Heart right ventricle (tissue), 16 donors: ENCODE measurements at regions of chr18 and their contacts with region 1.

Region 1: DNA sequence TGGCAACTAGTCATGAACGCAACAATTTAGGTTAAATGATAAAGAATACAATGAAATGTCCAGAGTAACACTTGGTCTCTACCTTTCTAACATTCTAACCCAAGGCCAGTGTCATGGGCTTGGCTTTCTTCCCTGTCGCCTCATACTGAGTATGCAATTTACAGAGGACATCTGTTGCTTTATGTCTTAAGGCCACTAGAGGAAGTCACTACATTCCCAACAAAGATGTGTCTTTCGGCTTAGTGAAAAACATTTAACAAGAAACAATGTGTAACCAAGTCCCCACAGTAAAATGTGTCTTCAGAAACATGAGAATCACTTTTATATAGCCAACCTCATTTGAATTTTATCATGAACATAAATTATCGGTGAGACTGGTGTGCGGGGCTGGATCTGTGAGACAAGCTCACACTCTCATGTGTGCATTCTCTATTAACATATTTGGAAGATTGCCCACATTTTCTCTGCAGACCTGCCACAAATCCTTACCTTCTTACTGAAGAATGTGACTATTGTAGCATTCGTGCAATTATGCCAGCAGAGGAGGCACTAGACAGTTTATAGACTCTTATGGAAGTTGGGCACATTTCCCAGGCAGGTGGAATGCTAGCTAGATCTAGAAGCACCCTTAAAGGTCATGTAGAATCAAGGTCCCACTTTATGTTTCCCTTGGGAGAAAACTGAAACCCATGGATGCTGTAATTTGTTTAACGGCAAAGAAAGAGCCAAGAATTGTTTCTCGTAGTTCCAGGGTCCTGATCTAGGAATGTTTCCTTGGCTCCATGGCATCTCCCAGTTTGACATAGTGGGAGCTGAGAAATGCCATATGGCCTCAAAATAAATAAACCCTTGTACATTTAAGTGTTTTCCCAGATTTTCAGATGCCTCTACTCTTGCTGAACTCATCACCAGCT is 101.8 kb downstream of the CD226 start:
- DNase-seq: no peak
- ATAC-seq: peak in 5 of 8 donors; percentile 23 to 62 (median 50)
- H3K4me3 ChIP-seq: no peak overlapping the region
- H3K27ac ChIP-seq: no peak overlapping the region
- H3K4me1 ChIP-seq: peaks cover 0 to 17% (median 10%) of the 10 kb centered on the region in 9 donors
- H3K27me3 ChIP-seq: no peaks in the 10 kb centered on the region
- CTCF ChIP-seq: peak in 4 of 9 donors; percentile 5 to 15 (median 12)

Region 2: GRCh38 chr18:70058916-70059315 is 213.1 kb after region 1 on chr18:
- intact Hi-C with region 1: loop called in 1 of 10 experiments (anchors 10 kb)
- DNase-seq: no peak
- ATAC-seq: no peak
- H3K4me3 ChIP-seq: no peak overlapping the region
- H3K27ac ChIP-seq: no peak overlapping the region
- H3K4me1 ChIP-seq: no peaks in the 10 kb centered on the region
- H3K27me3 ChIP-seq: no peaks in the 10 kb centered on the region
- CTCF ChIP-seq: no peak